ENCODE measurements at regions of chr2 and their contacts with region 1.

Region 1: DNA sequence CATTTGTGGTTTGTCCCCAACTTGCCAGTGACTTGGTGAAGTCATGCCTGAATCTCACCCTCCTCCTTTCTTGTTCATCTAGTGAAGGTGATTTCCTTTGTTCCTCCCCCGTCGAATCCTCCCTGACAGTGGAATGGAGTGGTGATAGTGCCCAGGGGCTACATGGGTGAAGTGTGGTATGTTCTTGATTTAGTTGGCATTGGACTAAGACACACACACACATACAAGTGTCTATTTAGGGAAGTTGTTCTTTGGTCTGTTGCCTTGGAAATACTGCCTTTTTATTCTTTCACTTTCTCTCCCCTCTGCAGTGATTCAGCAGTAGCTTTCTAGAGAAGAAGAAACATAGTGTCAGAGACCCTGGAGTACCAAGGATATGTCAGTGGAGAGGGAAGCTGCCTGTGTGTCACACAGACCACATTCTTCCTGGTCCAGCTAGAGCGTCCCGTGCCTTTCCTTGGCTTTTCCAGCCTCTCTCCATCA is 10.9 kb downstream of the INPP4A start:
- DNase-seq: peak; percentile 28
- H3K4me3 ChIP-seq: no peak overlapping the region
- H3K27ac ChIP-seq: peak overlapping the region; percentile 39 to 76 (median 72)
- H3K4me1 ChIP-seq: peaks cover 0 to 99% (median 89%) of the 10 kb centered on the region in 4 donors
- H3K27me3 ChIP-seq: no peaks in the 10 kb centered on the region
- CTCF ChIP-seq: no peak
- EP300 ChIP-seq: peak in 1 of 4 donors; percentile 36
- POLR2A ChIP-seq: no peak

Region 2: DNA sequence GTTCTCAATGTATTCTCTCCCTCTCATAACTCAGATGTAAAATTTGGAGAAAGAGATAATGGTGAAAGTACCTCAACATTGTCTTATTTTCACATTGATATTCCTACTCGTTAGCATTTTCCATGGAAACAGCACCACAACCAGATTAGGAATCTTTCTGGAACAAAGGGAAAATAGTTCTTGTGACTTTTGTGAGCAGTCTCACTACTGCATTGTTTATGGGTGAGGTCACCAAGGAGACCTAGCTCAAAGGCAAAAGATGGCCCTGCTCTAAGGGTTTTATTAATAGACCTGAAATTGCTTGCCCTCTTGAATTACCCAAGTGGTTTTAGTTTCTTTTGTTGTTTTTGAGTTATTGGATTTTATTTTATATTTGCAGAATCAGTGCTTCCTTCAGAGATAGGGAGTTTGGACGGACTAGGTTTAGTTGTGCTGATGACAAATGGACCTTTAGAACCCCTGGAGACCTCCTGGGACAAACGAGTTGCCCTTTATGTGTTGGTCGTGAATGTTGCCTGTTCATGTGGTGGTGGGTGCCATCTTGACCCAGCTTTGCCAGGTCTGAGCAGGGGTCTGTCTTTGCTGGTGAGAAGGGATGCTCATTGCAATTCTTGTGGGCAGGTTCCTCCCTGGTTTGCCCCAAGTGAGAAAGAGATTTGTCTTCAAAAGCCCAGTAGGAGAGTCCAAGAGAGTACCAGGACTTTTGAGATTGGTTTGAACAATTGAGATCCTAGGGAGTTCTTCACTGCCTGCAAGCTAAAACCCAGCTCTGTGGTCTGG is 47.2 kb after region 1 on chr2:
- intact Hi-C with region 1: loop called (anchors 5 kb)
- DNase-seq: peak; percentile 20
- H3K4me3 ChIP-seq: no peak overlapping the region
- H3K27ac ChIP-seq: peak overlapping the region; percentile 39 to 82 (median 68)
- H3K4me1 ChIP-seq: peaks cover 0 to 73% (median 70%) of the 10 kb centered on the region in 4 donors
- H3K27me3 ChIP-seq: no peaks in the 10 kb centered on the region
- CTCF ChIP-seq: no peak
- EP300 ChIP-seq: no peak
- POLR2A ChIP-seq: no peak